ENCODE measurements at regions of chr11 and their contacts with region 1.

Region 1: DNA sequence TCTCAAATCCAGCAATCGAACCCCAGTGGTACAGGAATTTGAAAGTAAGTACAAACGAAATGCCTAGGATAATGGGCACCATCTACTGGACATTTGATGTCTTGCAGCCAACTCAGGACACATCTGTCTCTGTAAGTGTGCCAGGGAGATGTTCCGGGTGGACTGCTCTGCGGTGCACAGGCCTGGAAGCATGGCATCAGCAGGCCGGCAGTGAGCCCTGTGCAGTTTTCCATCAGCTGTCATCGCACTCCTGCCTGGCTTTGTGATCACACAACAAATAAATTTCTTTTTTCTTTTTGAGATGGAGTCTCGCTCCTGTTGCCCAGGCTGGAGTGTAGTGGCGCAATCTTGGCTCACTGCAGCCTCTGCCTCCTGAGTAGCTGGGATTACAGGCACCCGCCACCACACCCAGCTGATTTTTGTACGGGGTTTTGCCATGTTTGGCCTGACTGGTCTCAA is 71.0 kb downstream of the JAM3 start:
- DNase-seq: peak; percentile 70
- H3K4me3 ChIP-seq: no peak overlapping the region
- H3K27ac ChIP-seq: no peak overlapping the region
- H3K4me1 ChIP-seq: no peaks in the 10 kb centered on the region
- H3K27me3 ChIP-seq: no peaks in the 10 kb centered on the region
- CTCF ChIP-seq: peak; percentile 76 to 87 (median 84)
- POLR2A ChIP-seq: no peak

Region 2: GRCh38 chr11:133618544-133618943 is 521.4 kb before region 1 on chr11:
- intact Hi-C with region 1: no loop called
- DNase-seq: no peak
- H3K4me3 ChIP-seq: no peak overlapping the region
- H3K27ac ChIP-seq: no peak overlapping the region
- H3K4me1 ChIP-seq: no peaks in the 10 kb centered on the region
- H3K27me3 ChIP-seq: no peaks in the 10 kb centered on the region
- CTCF ChIP-seq: no peak
- POLR2A ChIP-seq: no peak

Region 3: DNA sequence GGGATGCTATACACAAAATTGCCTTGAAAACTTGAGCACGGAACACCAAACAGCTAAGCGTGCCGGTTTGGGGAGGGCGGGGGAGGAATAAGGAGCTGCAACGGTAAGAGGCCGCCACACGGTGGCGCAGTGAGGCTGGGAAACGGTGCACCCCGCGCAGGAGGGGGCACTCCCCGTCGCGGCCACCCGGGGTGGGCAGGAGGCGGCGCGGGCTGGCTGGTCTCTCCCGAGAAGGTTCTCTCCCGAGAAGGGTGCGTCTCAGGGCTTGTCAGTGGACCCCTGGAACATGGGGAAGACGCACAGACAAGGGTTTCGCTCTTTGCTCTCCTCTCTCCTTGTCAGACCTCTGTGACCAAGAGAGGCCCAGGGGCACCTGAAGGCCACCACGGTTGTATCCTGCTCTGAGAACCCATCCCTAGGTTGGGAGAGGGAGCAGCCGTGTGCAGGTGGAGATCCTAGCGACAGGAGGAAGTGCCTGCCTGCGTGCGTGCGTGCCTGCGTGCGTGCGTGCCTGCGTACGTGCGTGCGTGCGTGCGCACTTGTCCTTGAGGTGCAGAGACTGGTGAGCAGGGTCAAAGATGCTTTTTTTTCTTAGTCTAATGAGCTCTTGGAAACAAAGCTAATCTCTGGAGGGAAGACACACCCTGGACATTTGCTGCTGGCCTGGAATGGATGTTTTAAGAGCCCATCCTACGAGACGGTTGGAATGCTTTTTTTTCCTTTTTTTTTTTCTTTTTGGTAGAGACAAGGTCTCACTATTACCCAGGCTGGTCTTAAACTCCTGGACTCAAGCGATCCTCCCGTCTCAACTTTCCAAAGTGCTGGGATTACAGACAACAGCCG is 89.1 kb before region 1 on chr11:
- intact Hi-C with region 1: loop called (anchors 1 kb)
- DNase-seq: peak; percentile 60
- H3K4me3 ChIP-seq: peak overlapping the region in 1 of 2 donors; percentile 10
- H3K27ac ChIP-seq: peak overlapping the region in 1 of 2 donors; percentile 62
- H3K4me1 ChIP-seq: no peaks in the 10 kb centered on the region
- H3K27me3 ChIP-seq: no peaks in the 10 kb centered on the region
- CTCF ChIP-seq: peak; percentile 87 to 93 (median 90)
- POLR2A ChIP-seq: no peak

Measured in prostate gland (tissue), 2 donors.